ENCODE measurements at regions of chr1 and their contacts with region 1.

Region 1: GRCh38 chr1:29245876-29246275 is 9.6 kb downstream of the PTPRU start:
- DNase-seq: peak; percentile 53
- ATAC-seq: peak; percentile 79
- H3K4me3 ChIP-seq: no peak overlapping the region
- H3K27ac ChIP-seq: no peak overlapping the region
- H3K4me1 ChIP-seq: peaks cover 15% of the 10 kb centered on the region
- H3K27me3 ChIP-seq: no peaks in the 10 kb centered on the region
- CTCF ChIP-seq: peak; percentile 63
- POLR2A ChIP-seq: no peak
- RAD21 ChIP-seq: peak; percentile 72

Region 2: GRCh38 chr1:29379443-29380073 is 133.7 kb after region 1 on chr1:
- CTCF ChIA-PET with region 1: no interaction called
- POLR2A ChIA-PET with region 1: no interaction called
- dilution Hi-C with region 1: no loop called
- in situ Hi-C with region 1: loop called (anchors 10 kb)
- intact Hi-C with region 1: no loop called
- DNase-seq: peak; percentile 38
- ATAC-seq: no peak; the same call in 1 of the 2 replicates
- H3K4me3 ChIP-seq: no peak overlapping the region
- H3K27ac ChIP-seq: no peak overlapping the region
- H3K4me1 ChIP-seq: no peaks in the 10 kb centered on the region
- H3K27me3 ChIP-seq: no peaks in the 10 kb centered on the region; the same call in 1 of the 2 replicates
- CTCF ChIP-seq: peak; percentile 62
- POLR2A ChIP-seq: no peak
- RAD21 ChIP-seq: peak; percentile 75

Region 3: GRCh38 chr1:29453502-29454240 is 207.8 kb after region 1 on chr1:
- CTCF ChIA-PET with region 1: no interaction called
- POLR2A ChIA-PET with region 1: no interaction called
- dilution Hi-C with region 1: no loop called
- in situ Hi-C with region 1: loop called (anchors 10 kb)
- intact Hi-C with region 1: no loop called
- DNase-seq: peak; percentile 53
- ATAC-seq: peak; percentile 75
- H3K4me3 ChIP-seq: no peak overlapping the region
- H3K27ac ChIP-seq: no peak overlapping the region
- H3K4me1 ChIP-seq: no peaks in the 10 kb centered on the region
- H3K27me3 ChIP-seq: no peaks in the 10 kb centered on the region; the same call in 1 of the 2 replicates
- CTCF ChIP-seq: peak; percentile 42
- POLR2A ChIP-seq: no peak
- RAD21 ChIP-seq: peak; percentile 32

Region 4: GRCh38 chr1:29465755-29466154 is 219.9 kb after region 1 on chr1:
- CTCF ChIA-PET with region 1: no interaction called
- POLR2A ChIA-PET with region 1: no interaction called
- dilution Hi-C with region 1: no loop called
- in situ Hi-C with region 1: no loop called
- intact Hi-C with region 1: no loop called
- DNase-seq: peak; percentile 23
- ATAC-seq: no peak
- H3K4me3 ChIP-seq: no peak overlapping the region
- H3K27ac ChIP-seq: no peak overlapping the region
- H3K4me1 ChIP-seq: no peaks in the 10 kb centered on the region
- H3K27me3 ChIP-seq: no peaks in the 10 kb centered on the region
- CTCF ChIP-seq: no peak
- POLR2A ChIP-seq: no peak
- RAD21 ChIP-seq: no peak

Region 5: DNA sequence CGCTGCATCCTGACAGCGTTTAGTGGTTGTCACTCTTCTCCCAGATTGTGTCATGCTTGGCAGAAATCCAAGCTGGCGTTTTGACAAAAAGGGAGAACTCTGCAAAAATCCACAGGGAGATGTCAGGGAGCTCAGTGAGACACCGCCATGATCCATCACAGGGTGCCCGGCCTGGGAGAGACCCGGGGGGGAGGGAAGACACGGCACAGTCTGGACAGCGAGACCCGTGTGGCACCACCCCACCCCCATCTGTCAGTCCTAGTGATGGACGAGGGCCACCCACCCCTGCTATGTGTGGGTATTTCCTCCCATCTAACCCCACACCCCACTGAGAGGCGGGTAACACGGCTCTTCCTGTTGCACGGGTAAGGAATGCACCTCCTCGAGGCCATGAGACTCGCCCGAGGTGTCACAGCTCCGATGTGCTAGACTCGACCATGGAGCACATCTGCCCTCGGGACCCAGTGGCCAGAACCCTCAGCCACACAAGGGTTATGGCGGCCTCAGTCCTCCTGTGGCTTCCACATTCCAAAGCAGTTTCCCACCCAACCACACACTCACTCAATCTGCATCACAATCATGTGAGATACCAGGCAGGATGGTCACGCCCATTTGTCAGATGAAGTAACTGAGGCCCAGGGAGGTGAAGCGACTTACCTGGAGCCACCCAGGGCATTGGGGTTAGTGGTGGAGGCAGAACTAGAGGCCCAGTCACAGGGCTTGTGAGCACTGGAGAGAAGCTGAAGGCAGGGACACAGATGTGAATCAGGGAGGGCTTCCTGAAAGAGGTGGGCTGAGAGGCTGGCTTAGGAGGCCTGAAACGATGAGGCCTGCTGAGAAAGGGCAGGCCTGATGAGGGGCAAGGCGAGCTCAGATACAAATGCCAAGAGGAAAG is 789.0 kb after region 1 on chr1:
- CTCF ChIA-PET with region 1: no interaction called
- POLR2A ChIA-PET with region 1: no interaction called
- dilution Hi-C with region 1: no loop called
- in situ Hi-C with region 1: no loop called
- intact Hi-C with region 1: no loop called
- DNase-seq: peak; percentile 5
- ATAC-seq: no peak
- H3K4me3 ChIP-seq: no peak overlapping the region
- H3K27ac ChIP-seq: no peak overlapping the region
- H3K4me1 ChIP-seq: no peaks in the 10 kb centered on the region
- H3K27me3 ChIP-seq: no peaks in the 10 kb centered on the region
- CTCF ChIP-seq: no peak
- POLR2A ChIP-seq: no peak
- RAD21 ChIP-seq: no peak

Region 6: DNA sequence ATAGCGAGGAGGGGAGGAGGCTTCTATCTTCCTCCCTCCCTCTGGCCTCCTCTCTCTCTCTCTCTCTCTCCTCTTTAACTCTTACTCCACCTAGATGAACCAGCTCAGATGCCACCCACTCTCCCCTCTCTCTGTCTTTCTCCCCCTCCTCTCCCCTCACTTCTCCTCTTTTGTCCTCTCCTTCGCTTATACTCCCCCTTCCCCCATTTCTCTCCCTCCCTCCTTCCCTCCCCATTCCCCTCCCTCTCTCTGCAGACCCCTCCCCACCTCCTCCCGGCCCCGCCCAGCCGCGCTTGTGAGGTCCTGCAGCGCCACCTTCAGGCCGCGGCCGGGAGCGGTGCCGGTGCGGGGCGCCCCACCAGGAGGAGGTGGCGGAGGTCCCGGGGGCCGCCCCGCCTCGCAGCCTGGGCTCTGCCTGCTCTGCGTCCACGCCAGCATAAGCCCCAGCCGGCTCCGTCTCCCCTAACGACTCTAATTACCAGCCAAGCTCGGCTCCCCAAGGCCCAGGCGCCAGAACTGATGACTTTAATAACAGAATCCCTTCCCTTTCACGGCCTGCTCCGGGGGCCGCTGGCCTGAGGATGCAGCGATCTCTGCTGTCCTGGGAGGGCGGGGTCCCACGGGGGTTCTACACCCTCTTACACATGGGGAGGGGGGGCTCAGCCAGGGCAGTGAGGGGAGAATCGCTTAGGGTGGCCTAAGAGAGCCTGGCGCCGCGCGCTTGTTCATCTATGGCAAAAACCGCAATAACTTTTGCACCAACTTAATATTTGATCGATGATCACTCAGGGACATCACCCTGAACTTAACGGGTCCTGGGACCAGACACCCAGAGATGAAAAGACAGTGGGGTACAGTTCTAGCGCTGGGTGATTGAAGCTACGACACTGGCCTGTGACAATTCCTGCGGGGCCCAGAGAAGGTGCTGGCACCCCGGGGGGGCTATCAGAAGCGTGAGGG is 840.2 kb after region 1 on chr1:
- CTCF ChIA-PET with region 1: no interaction called
- POLR2A ChIA-PET with region 1: no interaction called
- dilution Hi-C with region 1: no loop called
- in situ Hi-C with region 1: loop called (anchors 10 kb)
- intact Hi-C with region 1: no loop called
- DNase-seq: peak; percentile 31
- ATAC-seq: peak; percentile 67
- H3K4me3 ChIP-seq: no peak overlapping the region
- H3K27ac ChIP-seq: peak overlapping the region; percentile 48; the same call in 1 of the 2 replicates
- H3K4me1 ChIP-seq: peaks cover 23% of the 10 kb centered on the region
- H3K27me3 ChIP-seq: no peaks in the 10 kb centered on the region; the same call in 1 of the 2 replicates
- CTCF ChIP-seq: peak; percentile 73
- POLR2A ChIP-seq: no peak
- RAD21 ChIP-seq: peak; percentile 74